Common myeloid progenitor, CD34-positive (primary cell): ENCODE measurements at regions of chr10 and their contacts with region 1.

Region 1: DNA sequence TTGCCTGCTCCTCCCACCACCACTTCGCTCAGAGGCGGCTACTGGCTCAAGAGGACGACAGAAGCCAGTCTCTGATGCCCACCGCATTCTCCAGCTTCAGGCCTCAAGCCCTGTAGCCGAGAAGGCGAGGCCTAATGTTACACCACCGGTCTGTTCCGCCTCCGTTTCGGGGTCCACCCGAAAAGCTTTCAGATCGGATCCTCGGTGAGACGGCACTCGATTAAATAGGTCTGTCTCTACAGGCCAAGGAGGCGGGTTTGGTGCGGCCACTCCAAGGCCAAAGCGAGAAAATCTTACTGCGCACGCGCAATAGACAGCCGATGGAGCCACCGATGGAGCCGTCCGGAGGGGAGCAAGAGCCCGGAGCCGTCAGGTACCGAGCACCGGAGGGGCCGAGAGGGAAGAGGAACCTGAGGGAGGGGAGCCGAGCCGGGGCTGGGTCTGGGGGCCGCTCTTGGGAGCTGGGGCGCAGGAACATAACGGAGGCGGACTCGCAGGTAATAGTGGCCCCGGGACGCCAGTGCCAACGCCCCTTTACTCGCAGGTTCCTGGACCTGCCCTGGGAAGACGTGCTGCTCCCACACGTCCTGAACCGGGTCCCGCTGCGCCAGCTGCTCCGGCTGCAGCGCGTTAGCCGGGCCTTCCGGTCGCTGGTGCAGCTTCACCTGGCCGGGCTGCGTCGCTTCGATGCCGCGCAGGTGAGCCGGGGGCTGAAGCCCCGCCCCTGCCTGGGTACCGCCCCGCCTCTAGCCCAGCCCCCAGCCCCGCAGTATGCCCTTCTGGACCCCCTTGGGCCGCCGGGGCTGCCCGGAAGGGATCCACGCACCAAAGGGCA is at the start of gene FBXL15:
- DNase-seq: peak; percentile 96 to 98 (median 98)
- H3K4me3 ChIP-seq: peak within 1 kb of the TSS; percentile 87 to 96 (median 90)
- H3K27ac ChIP-seq: peak within 1 kb of the TSS; percentile 47 to 85
- H3K4me1 ChIP-seq: peaks cover 3 to 46% (median 40%) of the 10 kb centered on the region in 4 experiments
- H3K27me3 ChIP-seq: peaks cover 6 to 25% (median 11%) of the 10 kb centered on the region in 5 experiments

Region 2: GRCh38 chr10:102300278-102300843 is 120.7 kb before region 1 on chr10:
- CTCF ChIA-PET with region 1: no interaction called
- POLR2A ChIA-PET with region 1: no interaction called
- DNase-seq: no peak
- H3K4me3 ChIP-seq: no peak overlapping the region
- H3K27ac ChIP-seq: no peak overlapping the region
- H3K4me1 ChIP-seq: peaks cover 0 to 5% (median under 1%) of the 10 kb centered on the region in 4 experiments
- H3K27me3 ChIP-seq: no peaks in the 10 kb centered on the region

Region 3: DNA sequence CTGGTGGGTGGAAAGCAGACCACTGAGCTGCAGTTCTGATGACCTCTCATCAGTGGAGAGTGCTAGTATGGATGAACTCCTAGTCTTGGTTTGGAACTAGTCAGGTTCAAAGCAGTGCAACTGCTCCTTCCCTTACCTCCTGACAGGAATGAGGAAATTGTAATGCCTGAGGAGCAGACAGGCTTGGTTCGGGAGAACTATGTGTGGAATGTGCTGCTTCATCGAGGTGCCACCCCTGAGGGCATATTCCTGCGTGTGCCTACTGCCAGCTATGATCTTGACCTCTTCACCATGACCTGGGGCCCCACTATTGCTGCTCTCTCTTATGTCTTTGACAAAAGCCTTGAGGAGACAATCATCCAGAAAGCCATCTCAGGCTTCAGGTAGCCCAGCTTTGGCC is 53.0 kb before region 1 on chr10:
- CTCF ChIA-PET with region 1: no interaction called
- POLR2A ChIA-PET with region 1: no interaction called
- DNase-seq: no peak
- H3K4me3 ChIP-seq: no peak overlapping the region
- H3K27ac ChIP-seq: no peak overlapping the region
- H3K4me1 ChIP-seq: no peaks in the 10 kb centered on the region
- H3K27me3 ChIP-seq: no peaks in the 10 kb centered on the region

Region 4: DNA sequence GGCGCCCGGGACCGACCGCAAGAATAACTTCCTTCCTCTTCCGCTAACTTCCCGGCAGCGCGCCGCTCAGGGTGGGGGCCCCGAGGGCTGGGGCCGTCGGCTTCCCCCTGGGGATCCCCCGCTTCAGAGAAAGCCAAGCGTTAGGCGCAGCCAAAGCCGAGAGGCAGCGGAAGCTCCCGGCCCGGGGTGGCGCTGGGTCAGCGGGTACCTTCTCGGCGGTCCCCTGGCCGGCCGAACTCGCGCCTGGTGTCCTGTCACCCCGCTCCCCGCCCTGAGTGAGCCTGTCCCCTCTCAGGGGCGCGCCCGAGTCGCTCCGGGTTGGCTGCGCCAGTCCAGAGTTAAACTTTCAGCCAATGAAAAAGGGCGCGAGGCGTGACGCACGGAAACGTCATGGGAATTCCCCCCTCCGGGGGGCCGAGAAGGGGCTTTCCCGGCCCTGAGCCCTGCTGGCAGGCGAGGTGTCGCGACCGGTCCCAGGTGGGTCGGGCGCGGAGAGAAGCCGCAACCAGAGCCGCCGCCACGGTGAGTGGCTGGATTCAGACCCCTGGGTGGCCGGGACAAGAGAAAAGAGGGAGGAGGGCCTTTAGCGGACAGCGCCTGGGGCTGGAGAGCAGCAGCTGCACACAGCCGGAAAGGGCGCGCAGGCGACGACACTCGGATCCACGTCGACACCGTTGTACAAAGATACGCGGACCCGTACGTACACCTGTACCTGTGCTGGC is 26.8 kb before region 1 on chr10:
- CTCF ChIA-PET with region 1: interaction called, 31 read pairs
- POLR2A ChIA-PET with region 1: interaction called, 28 read pairs
- DNase-seq: peak; percentile 97 to 98 (median 97)
- H3K4me3 ChIP-seq: peak overlapping the region; percentile 57 to 95 (median 74)
- H3K27ac ChIP-seq: peak overlapping the region; percentile 90 to 97
- H3K4me1 ChIP-seq: peaks cover 2 to 34% (median 32%) of the 10 kb centered on the region in 4 experiments
- H3K27me3 ChIP-seq: peaks cover 0 to 12% (median 2%) of the 10 kb centered on the region in 5 experiments

Region 5: GRCh38 chr10:102408728-102409603 is 12.1 kb before region 1 on chr10:
- CTCF ChIA-PET with region 1: interaction called, 15 read pairs
- POLR2A ChIA-PET with region 1: interaction called, 3 read pairs
- DNase-seq: peak in 2 of 3 donors; percentile 76 to 83
- H3K4me3 ChIP-seq: peak overlapping the region; percentile 30 to 77 (median 65)
- H3K27ac ChIP-seq: no peak overlapping the region
- H3K4me1 ChIP-seq: peaks cover 0 to 30% (median 22%) of the 10 kb centered on the region in 4 experiments
- H3K27me3 ChIP-seq: peaks cover 0 to 40% (median 28%) of the 10 kb centered on the region in 5 experiments

Region 6: DNA sequence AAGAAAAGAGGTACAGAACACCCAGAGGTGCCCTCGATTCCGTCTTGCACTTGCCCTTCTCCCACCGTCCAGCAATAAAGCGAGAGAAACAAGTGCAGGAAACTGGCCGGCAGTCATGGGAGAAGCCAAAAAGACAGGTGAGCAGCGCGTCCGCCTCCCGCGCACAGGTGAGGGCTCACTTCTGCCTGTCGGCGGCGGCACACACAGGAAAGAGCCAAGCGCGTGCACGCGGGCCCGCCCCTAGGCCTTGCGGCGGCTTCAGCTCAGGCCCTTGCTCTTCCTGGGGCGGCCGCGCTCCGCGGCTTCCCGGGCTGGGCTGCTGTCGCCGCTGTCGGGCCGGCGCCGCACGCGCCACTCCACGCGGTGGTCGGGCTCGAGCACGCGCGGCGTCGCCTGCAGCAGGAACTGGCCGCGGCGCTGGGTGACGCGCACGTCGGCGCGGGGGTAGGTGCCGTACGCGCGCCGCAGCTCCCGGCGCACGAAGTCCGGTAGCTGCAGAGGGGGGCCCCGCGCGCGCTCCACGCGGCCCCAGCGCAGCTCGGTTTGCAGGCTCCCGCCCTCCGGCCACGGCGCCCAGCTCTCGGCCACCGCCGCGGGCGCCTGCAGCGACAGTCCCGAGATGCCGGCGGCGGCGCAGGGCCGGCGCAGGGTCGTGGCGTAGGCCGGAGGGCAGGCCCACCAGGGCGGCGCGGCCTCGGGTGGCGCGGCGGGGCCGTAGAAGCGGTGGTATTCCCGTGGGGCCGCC is 29.3 kb after region 1 on chr10:
- CTCF ChIA-PET with region 1: interaction called, 20 read pairs
- POLR2A ChIA-PET with region 1: interaction called, 5 read pairs
- DNase-seq: peak; percentile 88 to 94 (median 92)
- H3K4me3 ChIP-seq: peak overlapping the region; percentile 75 to 98 (median 87)
- H3K27ac ChIP-seq: peak overlapping the region; percentile 61 to 83
- H3K4me1 ChIP-seq: peaks cover 6 to 33% (median 21%) of the 10 kb centered on the region in 4 experiments
- H3K27me3 ChIP-seq: no peaks in the 10 kb centered on the region